ENCODE measurements at regions of chr17 and their contacts with region 1.

Region 1: DNA sequence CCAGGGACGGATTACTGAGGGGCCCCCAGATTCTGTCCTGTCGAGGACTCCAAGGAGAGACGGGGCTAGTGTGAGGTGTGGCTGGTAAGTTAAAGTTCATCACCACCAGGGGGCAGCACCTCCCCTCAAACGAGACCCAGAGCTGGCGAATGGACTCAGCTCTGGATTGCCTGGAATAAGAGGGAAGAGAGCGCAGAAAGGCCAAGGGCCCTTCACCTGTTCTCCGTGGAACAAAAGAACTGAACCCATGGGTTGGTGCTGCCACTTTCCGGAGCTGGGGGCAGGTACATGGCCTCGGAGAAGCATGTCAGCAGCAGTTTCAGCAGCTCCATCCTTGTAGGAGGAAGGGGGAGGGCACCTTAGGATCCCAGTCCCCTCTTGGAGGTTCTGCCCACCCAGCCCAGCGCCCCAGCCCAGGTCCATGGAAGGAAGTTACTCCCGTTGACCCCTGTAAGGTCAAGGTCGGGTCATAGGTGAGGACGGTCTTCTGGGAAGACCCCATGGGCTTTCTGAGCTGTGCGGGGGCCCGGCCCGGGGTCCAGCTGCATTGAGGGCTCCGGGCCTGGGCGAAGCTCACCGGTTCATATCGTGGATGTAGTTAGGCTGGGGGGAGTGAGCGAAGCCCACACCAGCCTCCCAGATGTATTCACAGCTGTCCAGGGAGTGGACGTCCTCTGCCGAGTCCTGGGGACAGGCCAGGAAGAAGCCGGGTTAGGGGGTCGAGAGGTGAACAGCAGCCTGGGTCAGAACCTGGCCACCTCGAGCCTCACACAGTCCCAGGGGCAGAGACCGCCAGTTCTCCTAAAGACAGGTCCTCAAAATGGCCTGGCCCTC is 10.7 kb downstream of the HID1 start:
- H3K4me3 ChIP-seq: no peak overlapping the region
- H3K27ac ChIP-seq: no peak overlapping the region
- H3K4me1 ChIP-seq: no peaks in the 10 kb centered on the region
- CTCF ChIP-seq: peak; percentile 63

Region 2: DNA sequence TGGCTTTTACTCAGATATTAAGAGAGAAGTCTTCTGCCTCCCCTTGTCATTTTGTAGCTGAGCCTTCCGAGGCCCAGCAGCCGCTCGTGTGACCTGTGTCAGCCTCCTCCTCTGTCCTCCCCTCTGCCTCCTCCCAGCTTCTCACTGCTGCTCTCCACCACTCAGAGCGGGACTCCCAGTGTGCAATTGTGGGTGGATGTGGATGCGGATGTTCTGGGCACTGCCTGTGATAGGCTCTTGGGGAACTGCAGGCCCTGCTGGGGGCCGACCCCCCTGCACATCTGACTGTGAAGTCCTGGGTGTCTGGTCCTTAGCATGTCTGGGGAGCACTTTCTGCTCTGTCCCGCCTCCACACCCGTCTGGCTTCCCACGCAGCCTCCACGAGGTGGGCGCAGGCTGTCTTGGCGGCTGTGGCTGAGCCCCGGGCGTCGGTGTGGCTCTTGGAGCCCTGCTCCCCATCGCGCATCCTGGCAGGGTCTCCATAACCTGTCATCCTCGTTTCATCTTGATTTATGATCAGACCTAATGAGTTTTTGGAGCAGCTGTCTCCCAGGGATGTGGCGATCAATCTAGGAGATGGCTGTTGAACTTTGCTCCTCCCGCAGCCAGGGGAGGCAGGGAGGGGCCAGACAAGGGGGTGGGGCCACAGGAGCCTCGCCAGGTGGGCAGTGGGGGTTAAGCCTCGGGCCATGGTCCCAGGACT is 130.3 kb before region 1 on chr17:
- CTCF ChIA-PET with region 1: no interaction called
- POLR2A ChIA-PET with region 1: no interaction called
- H3K4me3 ChIP-seq: no peak overlapping the region
- H3K27ac ChIP-seq: no peak overlapping the region
- H3K4me1 ChIP-seq: no peaks in the 10 kb centered on the region
- CTCF ChIP-seq: no peak

Region 3: DNA sequence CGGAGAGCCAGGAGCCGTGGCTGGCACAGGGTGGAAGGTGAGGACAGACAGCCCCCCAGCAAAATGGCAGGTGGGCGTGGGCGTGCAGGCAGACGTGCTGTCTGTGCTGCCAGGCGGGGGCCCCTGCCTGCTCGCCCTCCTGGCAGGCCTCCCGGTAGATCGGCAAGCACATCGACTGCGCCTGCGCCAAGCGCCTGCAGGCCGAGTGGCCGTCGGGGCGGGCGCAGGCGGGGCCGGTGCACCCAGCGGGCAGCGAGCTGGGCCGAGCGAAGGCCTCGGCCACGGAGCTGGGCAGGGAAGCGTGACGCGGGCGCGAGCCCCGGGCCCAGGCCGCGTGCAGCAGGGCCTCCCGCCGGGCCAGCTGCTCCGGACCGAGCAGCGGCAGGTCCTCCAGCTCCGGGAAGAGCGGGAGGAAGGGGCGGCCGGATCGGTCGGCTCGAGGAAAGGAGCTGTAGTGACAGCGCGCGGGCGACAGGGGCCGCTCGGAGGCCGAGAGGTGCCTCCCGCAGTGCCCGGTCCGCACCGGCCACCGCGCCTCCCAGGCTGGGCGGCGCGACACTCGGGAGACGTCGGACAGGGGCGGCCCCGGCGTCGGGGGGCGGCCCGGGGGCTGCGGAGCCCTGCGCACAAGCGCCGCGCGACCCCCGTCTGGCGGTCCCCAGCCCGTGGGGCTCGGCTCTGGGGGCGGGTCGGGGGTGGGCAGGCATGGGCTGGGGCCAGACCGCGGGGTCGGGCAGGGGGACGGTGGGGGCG is 119.1 kb before region 1 on chr17:
- CTCF ChIA-PET with region 1: interaction called, 22 read pairs
- POLR2A ChIA-PET with region 1: no interaction called
- H3K4me3 ChIP-seq: peak overlapping the region; percentile 27
- H3K27ac ChIP-seq: peak overlapping the region; percentile 46; the same call in 1 of the 2 replicates
- H3K4me1 ChIP-seq: 0 out of 2 replicates have a peak, but pooled peaks cover 3% of the 10 kb centered on the region
- CTCF ChIP-seq: no peak

Region 4: GRCh38 chr17:74923533-74924249 is 38.2 kb before region 1 on chr17:
- CTCF ChIA-PET with region 1: interaction called, 69 read pairs
- POLR2A ChIA-PET with region 1: interaction called, 4 read pairs
- H3K4me3 ChIP-seq: peak overlapping the region; percentile 37
- H3K27ac ChIP-seq: no peak overlapping the region
- H3K4me1 ChIP-seq: no peaks in the 10 kb centered on the region
- CTCF ChIP-seq: peak; percentile 90

Region 5: GRCh38 chr17:74972107-74972972 is 10.5 kb after region 1 on chr17 and contains the start of gene HID1:
- CTCF ChIA-PET with region 1: interaction called, 42 read pairs
- POLR2A ChIA-PET with region 1: interaction called, 19 read pairs
- H3K4me3 ChIP-seq: peak within 1 kb of the TSS; percentile 74
- H3K27ac ChIP-seq: peak within 1 kb of the TSS; percentile 60; the same call in 1 of the 2 replicates
- H3K4me1 ChIP-seq: peaks cover 4% of the 10 kb centered on the region; the same call in 1 of the 2 replicates
- CTCF ChIP-seq: no peak; the same call in 1 of the 2 replicates

Region 6: GRCh38 chr17:74994476-74994875 is 32.6 kb after region 1 on chr17:
- CTCF ChIA-PET with region 1: interaction called, 18 read pairs
- POLR2A ChIA-PET with region 1: no interaction called
- H3K4me3 ChIP-seq: no peak overlapping the region
- H3K27ac ChIP-seq: no peak overlapping the region
- H3K4me1 ChIP-seq: no peaks in the 10 kb centered on the region
- CTCF ChIP-seq: no peak

Region 7: GRCh38 chr17:75024686-75025397 is 63.0 kb after region 1 on chr17:
- CTCF ChIA-PET with region 1: interaction called, 11 read pairs
- POLR2A ChIA-PET with region 1: no interaction called
- H3K4me3 ChIP-seq: no peak overlapping the region
- H3K27ac ChIP-seq: no peak overlapping the region
- H3K4me1 ChIP-seq: no peaks in the 10 kb centered on the region
- CTCF ChIP-seq: no peak

Region 8: GRCh38 chr17:75238684-75239191 is 276.9 kb after region 1 on chr17:
- CTCF ChIA-PET with region 1: interaction called, 10 read pairs
- POLR2A ChIA-PET with region 1: no interaction called
- H3K4me3 ChIP-seq: no peak overlapping the region
- H3K27ac ChIP-seq: no peak overlapping the region
- H3K4me1 ChIP-seq: no peaks in the 10 kb centered on the region
- CTCF ChIP-seq: peak; percentile 86